ENCODE measurements at regions of chr12 and their contacts with region 1.

Region 1: GRCh38 chr12:10726940-10727339 is 3.8 kb upstream of the YBX3 start:
- DNase-seq: no peak
- H3K4me3 ChIP-seq: no peak overlapping the region
- H3K27ac ChIP-seq: no peak overlapping the region
- H3K4me1 ChIP-seq: peaks cover 9% of the 10 kb centered on the region
- H3K27me3 ChIP-seq: no peaks in the 10 kb centered on the region
- CTCF ChIP-seq: no peak
- POLR2A ChIP-seq: no peak

Region 2: GRCh38 chr12:10652192-10652591 is 74.7 kb before region 1 on chr12:
- intact Hi-C with region 1: no loop called
- DNase-seq: no peak
- H3K4me3 ChIP-seq: no peak overlapping the region
- H3K27ac ChIP-seq: no peak overlapping the region
- H3K4me1 ChIP-seq: no peaks in the 10 kb centered on the region
- H3K27me3 ChIP-seq: no peaks in the 10 kb centered on the region
- CTCF ChIP-seq: no peak
- POLR2A ChIP-seq: no peak

Region 3: DNA sequence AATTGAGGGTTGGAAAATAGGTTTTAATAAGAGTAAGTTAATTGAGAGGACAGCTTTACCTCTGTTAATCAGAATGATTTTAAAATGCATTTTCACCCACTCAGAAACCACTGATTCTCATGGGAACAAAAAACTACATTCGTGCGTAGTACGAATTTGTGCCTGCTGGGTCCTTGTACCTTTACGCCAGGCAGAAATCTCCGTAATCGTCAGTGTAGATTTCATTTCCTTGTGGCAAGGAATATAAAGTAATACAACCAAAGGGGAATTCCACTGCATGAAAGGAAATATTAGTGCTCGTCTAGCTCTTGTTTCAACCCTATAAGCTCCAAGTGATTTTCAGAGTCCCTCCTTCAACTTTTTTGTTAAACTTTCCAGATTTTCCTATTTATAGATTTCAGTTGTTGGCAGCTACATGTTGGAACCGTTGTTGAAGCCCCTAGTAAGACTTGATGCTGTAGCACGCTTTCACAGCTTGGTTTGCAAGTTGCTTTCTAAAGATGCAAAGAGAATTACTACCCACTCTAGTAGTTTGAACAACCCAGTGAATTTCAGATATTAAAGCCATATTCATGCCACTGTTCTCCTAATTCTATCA is 1013.1 kb after region 1 on chr12:
- intact Hi-C with region 1: loop called (anchors 5 kb)
- DNase-seq: no peak
- H3K4me3 ChIP-seq: no peak overlapping the region
- H3K27ac ChIP-seq: no peak overlapping the region
- H3K4me1 ChIP-seq: peaks cover 9% of the 10 kb centered on the region
- H3K27me3 ChIP-seq: no peaks in the 10 kb centered on the region
- CTCF ChIP-seq: no peak
- POLR2A ChIP-seq: no peak